Activated B cell treated with CpG ODN at 0.5 μM for 24 hours (primary cell): ENCODE measurements at regions of chr5 and their contacts with region 1.

Region 1: GRCh38 chr5:176388444-176389134 is at the starts of genes HIGD2A and NOP16:
- DNase-seq: peak; percentile 92
- ATAC-seq: peak; percentile 90
- H3K4me3 Mint-ChIP-seq: peak within 1 kb of the TSS; percentile 100
- H3K27ac Mint-ChIP-seq: peak within 1 kb of the TSS; percentile 100
- H3K4me1 Mint-ChIP-seq: peaks cover 30% of the 10 kb centered on the region
- H3K27me3 Mint-ChIP-seq: no peaks in the 10 kb centered on the region
- CTCF ChIP-seq: no peak
- total RNA-seq, gene HIGD2A: 113 and 116 TPM in 2 replicates
- total RNA-seq, gene NOP16: 50.9 and 65.1 TPM in 2 replicates

Region 2: DNA sequence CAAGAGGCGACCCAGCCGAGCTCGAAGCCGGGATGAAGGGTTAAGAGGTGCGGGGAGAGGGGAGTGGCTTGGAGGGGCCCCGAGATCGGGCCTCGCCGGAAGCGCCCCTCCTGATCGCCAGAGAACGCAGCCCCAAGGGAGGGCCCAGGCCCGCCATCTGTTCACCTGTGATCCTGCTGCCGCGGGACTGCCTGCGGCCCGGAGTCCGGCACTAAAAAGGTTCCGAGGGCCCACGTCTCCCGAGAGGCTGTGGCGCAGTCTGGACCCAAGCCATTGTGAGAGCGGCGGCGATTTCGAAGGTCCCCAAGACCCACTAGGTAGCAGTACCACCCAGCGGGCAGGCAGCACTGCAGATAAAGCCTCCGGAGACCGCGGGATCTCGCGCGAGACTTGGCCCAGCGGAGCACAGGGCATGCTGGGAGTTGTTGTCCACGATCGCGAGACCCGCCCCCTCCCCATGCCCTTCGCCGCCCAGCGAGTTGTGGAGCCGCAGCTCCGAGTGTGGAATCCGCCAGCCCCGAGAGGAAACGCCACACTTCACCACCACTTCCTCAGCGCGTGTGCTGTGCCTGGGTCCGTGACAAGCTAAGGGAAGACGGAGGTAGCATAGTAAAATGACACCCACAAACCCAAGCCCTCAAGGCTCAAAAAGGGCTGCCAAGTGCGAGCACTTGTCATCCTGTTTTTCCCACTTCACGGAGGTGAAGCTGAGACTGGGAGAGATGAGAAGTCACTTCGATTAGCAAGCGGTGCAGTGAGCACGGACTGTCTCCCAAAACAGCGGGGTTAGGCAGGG is 27.0 kb before region 1 on chr5 and contains the start of gene KIAA1191:
- CTCF ChIA-PET with region 1: interaction called, 4 read pairs
- POLR2A ChIA-PET with region 1: interaction called, 45 read pairs
- intact Hi-C with region 1: loop called (anchors 1 kb)
- DNase-seq: peak; percentile 86
- ATAC-seq: peak; percentile 87
- H3K4me3 Mint-ChIP-seq: peak within 1 kb of the TSS; percentile 99
- H3K27ac Mint-ChIP-seq: peak within 1 kb of the TSS; percentile 98
- H3K4me1 Mint-ChIP-seq: peaks cover 28% of the 10 kb centered on the region
- H3K27me3 Mint-ChIP-seq: no peaks in the 10 kb centered on the region
- CTCF ChIP-seq: no peak
- total RNA-seq, gene KIAA1191: 56.6 and 57.5 TPM in 2 replicates

Region 3: GRCh38 chr5:176415952-176416924 is 27.6 kb after region 1 on chr5 and contains the start of gene CLTB:
- CTCF ChIA-PET with region 1: interaction called, 4 read pairs
- POLR2A ChIA-PET with region 1: no interaction called
- intact Hi-C with region 1: loop called (anchors 1 kb)
- DNase-seq: peak; percentile 80
- ATAC-seq: peak; percentile 97
- H3K4me3 Mint-ChIP-seq: peak within 1 kb of the TSS; percentile 80
- H3K27ac Mint-ChIP-seq: peak within 1 kb of the TSS; percentile 56
- H3K4me1 Mint-ChIP-seq: peaks cover 26% of the 10 kb centered on the region
- H3K27me3 Mint-ChIP-seq: peaks cover 8% of the 10 kb centered on the region
- CTCF ChIP-seq: no peak
- total RNA-seq, gene CLTB: 29.5 and 48.9 TPM in 2 replicates

Region 4: DNA sequence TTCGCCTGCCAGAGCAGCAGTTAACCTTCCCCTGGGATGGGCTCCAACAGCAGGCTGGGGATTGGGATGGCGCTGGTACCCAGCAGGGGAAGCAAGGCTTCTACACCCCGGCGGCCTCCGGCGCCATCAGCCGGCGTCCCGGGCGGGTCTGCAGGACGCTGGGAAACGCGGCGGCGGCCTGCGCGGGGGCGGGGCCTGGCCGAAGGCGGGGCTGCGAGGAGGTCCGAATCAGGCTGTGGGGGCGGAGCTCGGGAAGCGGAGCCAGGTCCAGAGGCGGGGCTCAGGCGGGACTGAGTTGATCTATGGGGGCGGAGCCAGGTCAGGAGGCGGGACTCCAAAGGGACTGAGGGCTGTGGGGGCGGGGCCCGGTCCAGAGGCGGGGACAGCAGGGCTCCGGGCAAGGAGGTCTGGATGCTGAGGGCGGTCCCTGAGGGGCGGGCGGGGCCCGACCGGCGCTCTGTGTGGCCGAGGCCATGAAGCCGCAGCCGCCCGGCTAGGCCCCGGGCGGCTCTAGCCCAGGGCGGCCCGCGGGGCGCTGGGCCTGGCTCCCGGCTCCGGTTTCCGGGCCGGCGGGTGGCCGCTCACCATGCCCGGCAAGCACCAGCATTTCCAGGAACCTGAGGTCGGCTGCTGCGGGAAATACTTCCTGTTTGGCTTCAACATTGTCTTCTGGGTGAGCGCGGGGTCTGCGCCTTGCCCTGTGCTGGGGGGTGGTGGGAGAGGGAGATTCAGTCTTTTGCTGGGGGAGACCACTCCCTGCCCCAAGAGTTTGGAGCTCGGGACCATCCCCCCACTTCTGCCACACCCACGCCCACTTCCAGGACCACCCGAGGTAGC is 258.7 kb after region 1 on chr5 and contains the start of gene TSPAN17:
- CTCF ChIA-PET with region 1: no interaction called
- POLR2A ChIA-PET with region 1: interaction called, 5 read pairs
- intact Hi-C with region 1: loop called (anchors 1 kb)
- DNase-seq: peak; percentile 99
- ATAC-seq: peak; percentile 97
- H3K4me3 Mint-ChIP-seq: peak within 1 kb of the TSS; percentile 90
- H3K27ac Mint-ChIP-seq: peak within 1 kb of the TSS; percentile 91
- H3K4me1 Mint-ChIP-seq: peaks cover 45% of the 10 kb centered on the region
- H3K27me3 Mint-ChIP-seq: no peaks in the 10 kb centered on the region
- CTCF ChIP-seq: no peak
- total RNA-seq, gene TSPAN17: 20.7 and 27.7 TPM in 2 replicates

Region 5: DNA sequence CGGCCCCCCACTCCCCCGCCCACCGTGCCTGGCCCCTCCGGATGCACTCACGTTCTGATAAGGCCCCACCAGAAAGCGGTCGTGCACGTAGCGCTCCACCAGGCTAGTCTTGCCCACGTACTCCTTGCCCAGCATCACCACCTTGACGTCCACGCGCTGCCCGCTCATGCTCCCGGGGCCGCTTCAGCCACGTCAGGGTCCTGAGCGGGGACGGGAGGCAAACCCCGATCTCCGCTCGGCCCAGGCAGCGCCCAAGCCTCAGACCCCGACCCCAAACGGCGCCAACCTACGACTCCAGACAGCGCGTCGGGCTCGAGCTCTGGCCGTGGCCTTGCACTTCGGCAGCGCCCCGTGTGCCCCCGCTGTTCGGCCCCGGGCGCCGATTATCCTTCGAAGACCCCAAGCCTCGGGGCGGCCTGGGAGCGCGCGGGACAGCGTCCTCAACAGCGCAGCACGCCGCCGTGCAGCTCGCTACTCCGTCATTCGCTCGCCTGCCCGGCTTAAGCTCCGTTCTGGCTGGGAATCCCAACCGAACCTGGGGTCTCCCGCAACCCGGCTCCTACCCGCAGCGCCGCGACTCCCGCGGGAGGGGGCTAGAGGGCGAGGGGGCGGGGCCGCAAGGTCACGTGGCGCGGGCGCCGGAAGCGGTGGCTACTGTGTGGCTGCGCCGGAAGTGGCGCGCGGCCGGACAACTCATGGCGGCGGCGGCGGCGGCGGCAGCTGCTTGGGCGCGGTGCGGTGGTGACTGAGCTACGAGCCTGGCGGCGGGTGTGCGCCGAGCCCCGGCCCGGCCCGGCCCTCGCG is 914.7 kb after region 1 on chr5 and contains the starts of genes PRELID1 and RAB24:
- CTCF ChIA-PET with region 1: no interaction called
- POLR2A ChIA-PET with region 1: no interaction called
- intact Hi-C with region 1: loop called (anchors 5 kb)
- DNase-seq: peak; percentile 93
- ATAC-seq: peak; percentile 41
- H3K4me3 Mint-ChIP-seq: peak within 1 kb of the TSS; percentile 90
- H3K27ac Mint-ChIP-seq: peak within 1 kb of the TSS; percentile 89
- H3K4me1 Mint-ChIP-seq: peaks cover 75% of the 10 kb centered on the region
- H3K27me3 Mint-ChIP-seq: no peaks in the 10 kb centered on the region
- CTCF ChIP-seq: no peak
- total RNA-seq, gene PRELID1: 141 and 160 TPM in 2 replicates
- total RNA-seq, gene RAB24: 35.6 and 36.3 TPM in 2 replicates

Region 6: DNA sequence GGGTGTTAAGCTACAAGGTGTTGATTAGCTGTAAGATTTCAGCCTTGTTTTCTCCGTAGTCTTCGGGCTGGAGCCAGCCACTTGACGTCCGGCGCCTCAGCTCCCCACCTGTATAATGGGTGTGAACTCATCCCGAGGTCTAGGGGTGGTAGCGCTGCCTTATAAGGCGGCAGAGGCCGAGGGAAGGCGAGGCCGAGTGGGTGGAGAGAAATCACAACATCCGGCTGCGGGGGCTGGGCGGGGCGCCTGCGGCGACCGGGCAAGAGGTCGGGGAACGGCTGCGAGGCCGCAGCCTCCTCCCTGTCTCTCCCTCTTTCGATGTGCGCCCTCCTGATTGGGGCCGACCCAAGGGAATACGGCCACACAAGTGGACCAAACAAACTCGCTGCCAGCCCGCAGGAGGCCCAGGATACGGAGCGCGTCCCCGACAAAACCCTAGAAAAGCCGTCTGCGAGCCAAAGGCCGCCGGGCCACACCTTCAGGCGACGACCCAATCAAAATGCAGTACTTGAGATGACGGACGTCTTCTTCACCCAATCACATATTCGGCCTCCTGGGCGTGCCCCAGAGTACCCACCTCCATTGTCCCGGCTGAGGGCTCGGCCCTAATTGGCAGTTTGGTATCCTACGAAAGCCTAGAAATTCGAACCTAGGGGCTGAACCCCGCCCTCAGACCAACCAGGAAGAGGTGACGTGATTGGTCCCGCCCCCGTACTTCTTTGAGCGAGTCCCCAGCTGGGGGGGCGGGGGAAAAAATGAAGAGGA is 1037.4 kb after region 1 on chr5:
- CTCF ChIA-PET with region 1: no interaction called
- POLR2A ChIA-PET with region 1: no interaction called
- intact Hi-C with region 1: loop called (anchors 5 kb)
- DNase-seq: peak; percentile 91
- ATAC-seq: peak; percentile 85
- H3K4me3 Mint-ChIP-seq: peak overlapping the region; percentile 91
- H3K27ac Mint-ChIP-seq: peak overlapping the region; percentile 93
- H3K4me1 Mint-ChIP-seq: peaks cover 53% of the 10 kb centered on the region
- H3K27me3 Mint-ChIP-seq: no peaks in the 10 kb centered on the region
- CTCF ChIP-seq: no peak